ENCODE measurements at regions of chr22 and their contacts with region 1.

Region 1: GRCh38 chr22:29154364-29155048 is 51.2 kb upstream of the EMID1 start:
- H3K4me3 Mint-ChIP-seq: peak overlapping the region; percentile 13
- H3K27ac Mint-ChIP-seq: no peak overlapping the region
- H3K4me1 Mint-ChIP-seq: peaks cover 44% of the 10 kb centered on the region
- H3K27me3 Mint-ChIP-seq: peaks cover 10% of the 10 kb centered on the region

Region 2: GRCh38 chr22:28600546-28601143 is 553.9 kb before region 1 on chr22:
- intact Hi-C with region 1: loop called (anchors 2 kb)
- H3K4me3 Mint-ChIP-seq: no peak overlapping the region
- H3K27ac Mint-ChIP-seq: no peak overlapping the region
- H3K4me1 Mint-ChIP-seq: no peaks in the 10 kb centered on the region
- H3K27me3 Mint-ChIP-seq: no peaks in the 10 kb centered on the region

Region 3: DNA sequence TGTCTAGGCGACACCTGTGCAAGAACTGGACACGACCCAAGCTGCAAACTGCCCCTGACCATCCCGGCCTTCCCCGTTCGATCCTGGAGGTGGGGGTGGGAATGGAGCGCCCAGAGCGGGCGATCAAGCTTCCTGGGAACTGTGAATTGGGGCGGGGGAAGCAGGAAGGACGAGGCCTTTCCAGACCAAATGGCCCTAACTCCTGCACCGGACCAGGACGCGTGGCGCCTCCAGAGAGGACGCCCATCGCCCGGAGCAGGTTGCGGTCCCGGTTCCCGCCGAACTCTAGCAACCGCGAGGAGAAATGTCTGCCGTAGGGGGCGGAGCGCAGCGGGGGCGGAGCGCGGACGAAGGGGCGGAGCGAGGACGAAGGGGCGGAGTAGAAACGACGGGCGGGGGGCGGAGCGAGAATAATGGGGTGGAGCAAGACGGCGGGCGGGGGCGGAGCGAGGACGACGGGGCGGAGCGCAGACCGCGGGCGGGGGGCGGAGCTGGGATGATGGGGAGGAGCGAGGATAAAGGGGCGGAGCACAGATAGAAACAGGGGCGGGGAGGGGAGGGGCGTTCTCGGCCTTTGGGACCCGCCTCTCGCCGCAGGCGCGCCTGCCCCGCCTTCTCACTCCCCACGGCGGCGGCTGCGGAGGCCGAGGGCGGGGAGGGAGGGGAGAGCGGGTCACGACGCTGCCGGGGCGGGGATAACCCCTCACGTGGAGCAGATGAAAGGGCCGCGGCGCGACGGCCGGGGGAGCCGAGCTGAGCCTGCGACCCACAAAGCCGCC is 271.4 kb before region 1 on chr22 and contains the start of gene ZNRF3:
- intact Hi-C with region 1: loop called (anchors 5 kb)
- H3K4me3 Mint-ChIP-seq: peak within 1 kb of the TSS; percentile 80
- H3K27ac Mint-ChIP-seq: peak within 1 kb of the TSS; percentile 70
- H3K4me1 Mint-ChIP-seq: peaks cover 11% of the 10 kb centered on the region
- H3K27me3 Mint-ChIP-seq: peaks cover 27% of the 10 kb centered on the region

Region 4: GRCh38 chr22:29112102-29112501 is 42.4 kb before region 1 on chr22:
- intact Hi-C with region 1: loop called (anchors 5 kb)
- H3K4me3 Mint-ChIP-seq: no peak overlapping the region
- H3K27ac Mint-ChIP-seq: no peak overlapping the region
- H3K4me1 Mint-ChIP-seq: no peaks in the 10 kb centered on the region
- H3K27me3 Mint-ChIP-seq: peaks cover 4% of the 10 kb centered on the region

Region 5: GRCh38 chr22:29208879-29209623 is 54.5 kb after region 1 on chr22:
- intact Hi-C with region 1: no loop called
- H3K4me3 Mint-ChIP-seq: no peak overlapping the region
- H3K27ac Mint-ChIP-seq: no peak overlapping the region
- H3K4me1 Mint-ChIP-seq: peaks cover 20% of the 10 kb centered on the region
- H3K27me3 Mint-ChIP-seq: peaks cover 45% of the 10 kb centered on the region

Region 6: DNA sequence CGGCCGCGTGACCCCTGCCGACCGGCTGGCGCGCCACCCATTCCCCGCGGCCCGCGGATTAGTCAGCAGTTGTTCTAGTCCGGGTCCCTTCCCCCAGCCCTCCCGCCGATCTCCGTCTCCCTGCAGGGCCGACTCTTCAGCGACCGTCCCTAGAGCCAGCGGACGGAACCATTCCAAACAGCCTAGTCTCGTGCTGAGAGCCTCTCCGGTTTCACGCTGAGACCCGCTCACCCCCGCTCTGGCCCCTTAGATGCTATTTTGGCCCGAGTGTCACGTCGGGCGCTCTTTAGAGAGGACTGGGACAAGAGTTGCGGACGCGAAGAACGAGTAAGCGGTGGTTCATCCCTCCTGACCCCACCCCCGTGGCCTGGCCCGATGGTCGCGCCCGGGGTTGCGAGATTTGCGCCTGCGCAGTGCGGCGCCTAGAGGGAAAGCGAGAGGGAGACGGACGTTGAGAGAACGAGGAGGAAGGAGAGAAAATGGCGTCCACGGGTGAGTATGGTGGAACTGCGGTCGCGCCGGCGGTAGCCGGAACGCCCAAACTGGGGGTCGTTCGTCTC is 113.4 kb after region 1 on chr22 and contains the starts of genes EWSR1 and RHBDD3:
- intact Hi-C with region 1: loop called (anchors 2 kb)
- H3K4me3 Mint-ChIP-seq: peak within 1 kb of the TSS; percentile 87
- H3K27ac Mint-ChIP-seq: peak within 1 kb of the TSS; percentile 100
- H3K4me1 Mint-ChIP-seq: peaks cover 47% of the 10 kb centered on the region
- H3K27me3 Mint-ChIP-seq: no peaks in the 10 kb centered on the region